ENCODE measurements at regions of chr13 and their contacts with region 1.

Region 1: DNA sequence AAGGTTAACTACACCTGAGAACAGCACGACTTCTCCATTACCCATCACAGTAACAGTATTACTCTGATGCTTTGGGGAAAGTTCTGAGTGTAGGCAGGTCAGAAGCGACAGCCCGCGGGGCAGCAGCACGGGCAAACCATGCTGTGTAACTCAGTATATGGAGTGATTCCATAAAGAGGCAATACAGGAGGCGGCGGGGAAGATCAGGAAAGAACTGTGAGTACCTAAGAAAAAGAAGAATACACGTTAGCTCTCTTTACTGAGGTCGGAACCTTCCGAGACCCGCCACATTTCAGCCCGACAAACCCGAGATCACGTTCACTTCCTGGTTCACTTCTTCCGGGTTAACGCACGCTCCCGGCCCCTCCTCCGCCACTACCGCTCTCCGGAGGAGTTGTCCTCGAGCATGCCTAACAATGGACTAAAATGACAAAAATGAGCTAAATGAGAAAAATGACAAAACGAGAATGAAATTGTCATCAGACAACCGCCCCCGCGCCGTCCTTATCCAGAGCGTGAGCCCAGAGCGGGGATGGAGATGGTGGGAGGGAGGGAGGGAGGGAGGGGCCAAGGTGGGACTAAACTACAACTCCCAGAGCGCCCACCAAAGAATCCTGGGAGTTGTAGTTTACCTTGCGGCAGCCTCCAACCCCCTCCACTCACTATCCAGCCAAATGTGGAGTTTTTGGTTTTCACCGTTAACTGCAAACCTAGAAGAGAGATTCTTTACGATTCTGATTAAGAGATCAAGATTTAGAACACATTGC is at the start of gene MTRF1:
- DNase-seq: peak; percentile 84
- H3K4me3 Mint-ChIP-seq: peak within 1 kb of the TSS; percentile 90
- H3K27ac Mint-ChIP-seq: peak within 1 kb of the TSS; percentile 96
- H3K4me1 Mint-ChIP-seq: peaks cover 13% of the 10 kb centered on the region
- H3K27me3 Mint-ChIP-seq: no peaks in the 10 kb centered on the region
- total RNA-seq, gene MTRF1: 16.2 to 21.5 TPM

Region 2: GRCh38 chr13:41310963-41311606 is 47.6 kb after region 1 on chr13 and contains the start of gene NAA16:
- CTCF ChIA-PET with region 1: no interaction called
- POLR2A ChIA-PET with region 1: no interaction called
- intact Hi-C with region 1: loop called (anchors 1 kb)
- DNase-seq: peak; percentile 97
- H3K4me3 Mint-ChIP-seq: peak within 1 kb of the TSS; percentile 93
- H3K27ac Mint-ChIP-seq: peak within 1 kb of the TSS; percentile 92
- H3K4me1 Mint-ChIP-seq: peaks cover 34% of the 10 kb centered on the region
- H3K27me3 Mint-ChIP-seq: no peaks in the 10 kb centered on the region
- total RNA-seq, gene NAA16: 19.2 to 23.2 TPM

Region 3: GRCh38 chr13:41332829-41333228 is 69.4 kb after region 1 on chr13:
- CTCF ChIA-PET with region 1: no interaction called
- POLR2A ChIA-PET with region 1: no interaction called
- intact Hi-C with region 1: no loop called
- DNase-seq: no peak
- H3K4me3 Mint-ChIP-seq: no peak overlapping the region
- H3K27ac Mint-ChIP-seq: no peak overlapping the region
- H3K4me1 Mint-ChIP-seq: peaks cover 9% of the 10 kb centered on the region
- H3K27me3 Mint-ChIP-seq: no peaks in the 10 kb centered on the region

Measured in activated CD4-positive, alpha-beta memory T cell treated with anti-CD3 and anti-CD28 coated beads for 36 hours (primary cell).